ENCODE measurements at regions of chr10 and their contacts with region 1.

Region 1: DNA sequence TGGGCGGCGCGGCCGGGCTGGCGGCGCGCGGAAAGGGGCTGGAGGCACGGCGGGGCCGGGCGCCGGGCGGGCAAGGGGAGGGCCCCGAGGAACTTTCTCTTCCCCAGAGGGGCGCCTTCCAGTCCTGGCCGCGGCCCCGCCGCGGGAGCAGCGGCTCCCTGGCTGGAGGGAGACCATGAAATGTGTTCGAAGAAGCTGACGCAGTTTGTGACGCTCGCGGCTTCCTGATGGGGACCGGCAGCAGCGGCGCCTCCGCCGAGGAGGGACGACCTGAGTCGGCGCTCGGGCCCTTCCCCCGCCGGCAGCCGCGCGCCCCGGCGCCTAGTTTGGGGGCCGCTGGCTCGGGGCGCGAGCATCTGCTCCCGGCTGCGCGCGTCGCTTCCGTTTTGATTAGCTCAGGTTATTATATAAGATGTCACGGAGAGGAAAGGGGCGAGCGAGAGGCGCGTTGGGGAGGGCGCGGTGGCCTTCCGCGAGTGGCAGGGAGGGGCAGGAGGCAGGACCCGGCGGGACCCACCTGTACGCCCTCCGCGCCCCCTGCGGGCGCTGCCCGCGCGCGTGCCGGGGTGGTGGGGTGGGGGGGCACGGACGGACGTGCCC is 57.1 kb upstream of the PCGF5 start:
- DNase-seq: peak; percentile 66
- H3K4me3 Mint-ChIP-seq: peak overlapping the region; percentile 90
- H3K27ac Mint-ChIP-seq: peak overlapping the region; percentile 90
- H3K4me1 Mint-ChIP-seq: peaks cover 39% of the 10 kb centered on the region
- H3K27me3 Mint-ChIP-seq: peaks cover 12% of the 10 kb centered on the region

Region 2: DNA sequence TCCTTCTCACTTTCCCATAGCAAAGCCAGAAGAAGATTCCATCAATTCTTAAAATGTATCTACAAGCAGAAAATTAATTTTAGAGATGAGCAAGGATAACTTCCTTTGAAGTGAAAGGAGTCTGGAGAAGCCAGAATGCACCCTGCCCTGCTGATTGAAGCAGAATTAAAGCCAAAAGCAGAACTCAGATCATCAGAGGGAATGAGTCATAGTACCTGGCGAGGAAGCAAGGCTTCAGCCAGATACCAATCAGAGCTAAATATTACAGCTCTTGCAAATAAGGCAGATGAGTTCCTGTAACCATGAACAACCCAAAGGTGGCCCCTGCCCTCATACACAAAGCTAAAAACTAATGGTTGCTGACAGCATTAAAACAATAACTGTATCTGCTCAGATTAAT is 316.0 kb before region 1 on chr10:
- intact Hi-C with region 1: no loop called
- DNase-seq: no peak
- H3K4me3 Mint-ChIP-seq: no peak overlapping the region
- H3K27ac Mint-ChIP-seq: no peak overlapping the region
- H3K4me1 Mint-ChIP-seq: peaks cover 7% of the 10 kb centered on the region
- H3K27me3 Mint-ChIP-seq: peaks cover 11% of the 10 kb centered on the region

Region 3: DNA sequence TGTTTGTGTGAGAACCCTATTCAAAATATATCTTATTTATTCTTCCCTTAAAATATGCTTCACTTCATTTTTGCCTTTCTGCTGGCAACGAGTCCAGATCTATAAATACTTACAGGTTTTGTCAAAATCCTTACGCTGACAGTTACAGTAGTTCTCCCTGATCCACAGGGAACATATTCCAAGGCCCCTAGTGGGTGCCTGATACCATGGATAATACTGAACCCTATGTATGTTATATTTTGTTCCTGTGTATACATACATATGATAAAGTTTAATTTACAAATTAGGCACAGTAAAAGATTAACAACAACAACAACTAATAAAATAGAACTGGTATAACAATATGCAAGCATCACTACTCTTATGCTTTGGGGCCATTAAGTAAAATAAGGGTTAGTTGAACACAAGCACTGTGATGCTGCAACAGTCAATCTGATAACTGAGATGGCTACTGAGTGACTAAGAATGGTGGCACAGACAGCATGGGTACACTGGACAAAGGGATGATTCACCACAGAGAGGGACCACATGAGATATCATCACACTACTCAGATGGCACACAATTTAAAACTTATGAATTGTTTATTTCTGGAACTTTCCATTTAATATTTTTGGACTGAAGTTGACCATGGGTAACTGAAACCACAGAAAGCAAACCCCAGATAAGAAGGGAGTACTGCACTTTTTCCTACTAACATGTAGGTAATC is 27.7 kb after region 1 on chr10:
- intact Hi-C with region 1: loop called (anchors 1 kb)
- DNase-seq: no peak
- H3K4me3 Mint-ChIP-seq: no peak overlapping the region
- H3K27ac Mint-ChIP-seq: no peak overlapping the region
- H3K4me1 Mint-ChIP-seq: peaks cover 61% of the 10 kb centered on the region
- H3K27me3 Mint-ChIP-seq: no peaks in the 10 kb centered on the region

Region 4: DNA sequence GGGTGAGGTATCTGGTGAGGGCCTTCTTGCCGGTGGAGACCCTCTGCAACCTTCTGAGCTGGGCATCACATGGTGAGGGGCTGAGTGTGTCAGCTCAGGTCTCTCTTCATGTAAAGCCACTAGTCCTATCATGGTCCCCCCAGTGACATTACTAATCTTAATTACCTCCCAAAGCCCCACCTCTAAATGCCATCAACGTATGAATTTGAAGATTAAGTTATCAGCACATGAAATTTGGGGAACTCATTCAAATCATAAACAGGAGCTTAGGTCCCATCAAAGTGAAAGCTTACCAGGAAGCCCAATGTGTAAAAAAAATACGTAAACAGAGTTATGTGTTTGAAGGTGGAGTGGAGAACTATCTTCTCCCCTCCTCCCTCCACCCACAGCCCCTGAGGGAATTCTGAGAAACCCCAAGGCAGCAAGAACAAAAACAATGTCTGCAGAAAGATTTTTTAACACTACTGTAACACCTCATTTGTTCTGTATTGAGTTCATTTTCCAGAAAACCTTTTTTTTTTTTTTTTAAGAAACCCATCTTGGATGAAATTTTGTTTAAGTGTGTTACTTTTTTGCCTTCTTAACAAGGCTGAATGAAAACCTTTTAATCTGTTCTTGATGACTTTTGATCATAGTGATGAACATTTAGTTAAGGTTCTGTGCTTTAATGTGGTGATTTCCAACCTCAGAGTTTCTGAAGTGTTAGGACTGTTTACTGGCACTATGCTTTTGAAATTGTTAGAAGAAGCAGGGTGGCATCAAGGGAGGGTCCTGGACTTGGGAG is 38.0 kb after region 1 on chr10:
- intact Hi-C with region 1: loop called (anchors 1 kb)
- DNase-seq: peak; percentile 47
- H3K4me3 Mint-ChIP-seq: peak overlapping the region; percentile 68
- H3K27ac Mint-ChIP-seq: peak overlapping the region; percentile 92
- H3K4me1 Mint-ChIP-seq: peaks cover 81% of the 10 kb centered on the region
- H3K27me3 Mint-ChIP-seq: no peaks in the 10 kb centered on the region

Region 5: DNA sequence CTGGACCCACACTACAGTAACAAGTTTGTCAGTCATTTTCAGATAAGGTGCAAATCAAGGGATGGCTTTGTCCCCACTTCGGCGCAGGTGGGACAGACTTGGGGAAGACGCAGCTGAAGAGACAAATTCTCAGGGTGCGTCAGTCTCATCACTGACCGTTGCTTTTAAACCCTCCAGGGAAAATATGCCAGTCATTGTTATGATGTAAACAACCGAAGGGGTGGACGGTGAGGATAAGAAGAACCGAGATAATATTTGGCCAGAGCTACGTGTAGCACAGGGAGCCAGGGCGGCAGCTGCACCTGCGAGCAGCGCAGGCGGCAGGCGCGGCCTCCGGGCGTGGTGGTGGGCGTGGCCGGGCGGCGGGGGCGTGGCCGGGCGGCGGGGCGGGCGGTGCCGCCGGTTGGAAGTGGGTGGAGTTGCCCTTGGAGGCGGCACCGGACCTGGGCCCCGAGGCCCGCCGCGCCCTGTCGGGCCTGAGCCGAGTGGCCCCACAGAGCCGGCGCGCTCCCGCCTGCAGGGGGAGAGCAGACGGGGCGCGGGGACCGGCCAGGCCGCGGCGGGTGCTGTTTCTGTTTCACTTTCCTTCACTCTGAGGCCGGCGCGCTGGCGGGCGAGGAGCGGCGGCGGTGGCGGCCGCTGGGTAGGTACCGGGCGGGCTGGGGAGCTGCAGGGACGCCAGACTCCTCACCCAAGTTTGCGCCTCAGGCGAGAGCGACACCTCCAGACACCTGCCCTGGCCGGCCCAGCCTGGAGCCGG is 57.0 kb after region 1 on chr10 and contains the start of gene PCGF5:
- intact Hi-C with region 1: loop called (anchors 1 kb)
- DNase-seq: peak; percentile 91
- H3K4me3 Mint-ChIP-seq: peak within 1 kb of the TSS; percentile 91
- H3K27ac Mint-ChIP-seq: peak within 1 kb of the TSS; percentile 79
- H3K4me1 Mint-ChIP-seq: peaks cover 54% of the 10 kb centered on the region
- H3K27me3 Mint-ChIP-seq: no peaks in the 10 kb centered on the region
- total RNA-seq, gene PCGF5: 51.7 TPM in 2 replicates

Region 6: DNA sequence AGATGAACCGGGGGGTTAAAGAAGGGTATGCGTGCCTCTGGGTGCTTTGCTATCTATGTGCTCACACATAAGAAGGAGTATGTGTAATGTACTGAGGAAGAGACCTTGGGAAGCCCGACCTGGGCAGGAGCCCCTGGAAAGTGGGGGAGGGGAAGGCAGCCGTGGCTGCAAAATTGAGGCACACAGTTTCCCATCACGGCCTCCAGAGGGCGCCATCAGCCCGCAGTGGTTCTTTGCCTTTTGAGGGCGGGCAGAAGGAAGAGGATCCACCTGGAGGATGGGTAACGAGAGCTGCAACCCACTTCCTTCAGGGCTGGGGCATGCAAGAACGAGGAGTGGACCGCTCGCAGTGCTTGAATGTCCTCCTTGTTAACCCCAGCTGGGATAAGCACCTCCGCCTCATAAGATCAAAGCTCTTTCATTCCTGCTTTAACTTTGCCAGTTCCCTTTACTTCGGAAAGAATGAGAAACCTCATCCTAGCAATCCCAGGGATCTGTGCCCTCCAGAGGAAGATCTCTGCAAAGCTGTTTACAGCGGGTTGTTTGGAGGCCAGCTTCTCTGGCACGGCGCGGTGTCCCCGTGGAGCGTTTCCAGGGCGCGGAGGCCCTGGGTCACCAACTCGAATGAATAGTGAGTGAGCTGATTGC is 135.0 kb after region 1 on chr10:
- intact Hi-C with region 1: no loop called
- DNase-seq: peak; percentile 68
- H3K4me3 Mint-ChIP-seq: peak overlapping the region; percentile 62
- H3K27ac Mint-ChIP-seq: no peak overlapping the region
- H3K4me1 Mint-ChIP-seq: peaks cover 9% of the 10 kb centered on the region
- H3K27me3 Mint-ChIP-seq: peaks cover 14% of the 10 kb centered on the region

Region 7: DNA sequence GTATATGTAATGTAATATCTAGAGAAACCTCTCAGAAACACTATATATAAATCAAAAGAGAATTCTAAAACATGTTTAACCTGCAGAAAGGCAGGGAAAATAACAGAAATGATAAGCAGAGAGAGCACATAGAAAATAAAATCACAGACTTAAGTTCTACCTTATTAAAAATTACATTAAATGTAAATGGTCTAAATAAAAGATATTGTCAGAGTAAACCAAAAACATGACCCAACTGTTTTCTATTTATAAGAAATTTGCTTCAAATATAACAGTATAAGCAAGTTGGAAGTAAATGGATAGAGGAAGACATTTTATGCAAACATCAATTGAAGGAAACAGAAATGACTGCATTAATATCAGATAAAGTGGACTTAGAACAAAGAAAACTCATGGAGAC is 290.2 kb after region 1 on chr10:
- intact Hi-C with region 1: no loop called
- DNase-seq: no peak
- H3K4me3 Mint-ChIP-seq: no peak overlapping the region
- H3K27ac Mint-ChIP-seq: no peak overlapping the region
- H3K4me1 Mint-ChIP-seq: no peaks in the 10 kb centered on the region
- H3K27me3 Mint-ChIP-seq: no peaks in the 10 kb centered on the region

Region 8: GRCh38 chr10:91923371-91924211 is 760.2 kb after region 1 on chr10 and contains the start of gene BTAF1:
- intact Hi-C with region 1: loop called (anchors 10 kb)
- DNase-seq: peak; percentile 89
- H3K4me3 Mint-ChIP-seq: peak within 1 kb of the TSS; percentile 98
- H3K27ac Mint-ChIP-seq: peak within 1 kb of the TSS; percentile 99
- H3K4me1 Mint-ChIP-seq: peaks cover 36% of the 10 kb centered on the region
- H3K27me3 Mint-ChIP-seq: peaks cover 9% of the 10 kb centered on the region
- total RNA-seq, gene BTAF1: 58.8 and 59.2 TPM in 2 replicates